Gastrocnemius medialis (tissue), 4 donors: ENCODE measurements at regions of chr9 and their contacts with region 1.

Region 1: GRCh38 chr9:14428781-14429230 is 114.9 kb upstream of the NFIB start:
- DNase-seq: peak; percentile 19 to 44
- ATAC-seq: peak; percentile 42 to 82
- H3K4me3 ChIP-seq: no peak overlapping the region
- H3K27ac ChIP-seq: no peak overlapping the region
- H3K4me1 ChIP-seq: peaks cover 5 to 10% of the 10 kb centered on the region in 2 donors
- H3K27me3 ChIP-seq: no peaks in the 10 kb centered on the region
- CTCF ChIP-seq: peak; percentile 45 to 85 (median 59)
- POLR2A ChIP-seq: no peak

Region 2: DNA sequence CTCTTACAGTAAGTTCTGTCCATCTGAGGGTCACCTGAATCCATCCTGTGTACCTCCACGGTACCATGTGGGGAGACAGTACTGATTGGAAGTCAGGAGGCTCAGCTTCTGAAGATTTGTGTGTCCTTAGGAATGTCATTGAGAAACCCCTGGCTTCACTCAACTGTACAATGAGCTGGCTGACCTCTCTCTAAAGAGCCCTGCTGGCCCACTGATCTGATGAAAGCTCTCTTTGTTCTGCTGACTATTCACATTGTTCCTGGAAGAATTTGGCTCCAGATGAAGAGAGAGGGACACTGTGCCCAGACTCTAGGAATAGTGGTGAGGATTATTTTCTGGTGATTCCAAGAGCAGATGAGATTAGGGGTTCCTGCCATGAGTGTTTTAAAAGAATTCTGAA is 1512.8 kb before region 1 on chr9:
- in situ Hi-C with region 1: no loop called
- intact Hi-C with region 1: loop called (anchors 10 kb)
- DNase-seq: no peak
- ATAC-seq: no peak
- H3K4me3 ChIP-seq: no peak overlapping the region
- H3K27ac ChIP-seq: no peak overlapping the region
- H3K4me1 ChIP-seq: no peaks in the 10 kb centered on the region
- H3K27me3 ChIP-seq: no peaks in the 10 kb centered on the region
- CTCF ChIP-seq: no peak
- POLR2A ChIP-seq: no peak

Region 3: GRCh38 chr9:13213337-13213736 is 1215.5 kb before region 1 on chr9:
- in situ Hi-C with region 1: loop called in 1 of 4 experiments (anchors 25 kb)
- intact Hi-C with region 1: no loop called
- DNase-seq: no peak
- ATAC-seq: no peak
- H3K4me3 ChIP-seq: no peak overlapping the region
- H3K27ac ChIP-seq: no peak overlapping the region
- H3K4me1 ChIP-seq: peaks cover 0 to 7% of the 10 kb centered on the region in 2 donors
- H3K27me3 ChIP-seq: no peaks in the 10 kb centered on the region
- CTCF ChIP-seq: peak in 4 of 5 experiments; percentile 19 to 53 (median 31)
- POLR2A ChIP-seq: no peak

Region 4: GRCh38 chr9:14466429-14466818 is 37.6 kb after region 1 on chr9:
- in situ Hi-C with region 1: no loop called
- intact Hi-C with region 1: no loop called
- DNase-seq: no peak
- ATAC-seq: no peak
- H3K4me3 ChIP-seq: no peak overlapping the region
- H3K27ac ChIP-seq: no peak overlapping the region
- H3K4me1 ChIP-seq: no peaks in the 10 kb centered on the region
- H3K27me3 ChIP-seq: no peaks in the 10 kb centered on the region
- CTCF ChIP-seq: no peak
- POLR2A ChIP-seq: no peak

Region 5: DNA sequence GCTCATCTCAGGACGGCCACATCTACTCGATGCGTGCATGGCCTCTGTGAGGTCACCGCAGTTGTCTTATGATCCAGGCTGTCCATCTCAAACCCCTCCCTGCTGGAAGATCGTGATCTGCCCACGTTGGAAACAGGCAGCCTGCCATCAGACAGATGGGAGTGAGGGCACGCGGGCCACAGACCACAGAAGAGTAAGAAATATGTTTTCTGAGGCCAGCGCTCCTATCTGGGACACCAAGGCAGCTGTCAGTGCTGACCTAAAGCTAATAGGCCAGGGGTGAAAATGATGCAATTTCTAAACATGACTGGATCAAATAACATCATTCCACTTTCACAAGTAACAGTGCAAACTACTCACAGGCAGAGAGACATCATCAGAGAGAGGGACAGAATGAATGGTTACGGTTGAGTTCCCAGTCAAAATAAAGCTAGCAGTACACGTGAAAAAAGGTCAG is 350.8 kb after region 1 on chr9:
- in situ Hi-C with region 1: no loop called
- intact Hi-C with region 1: no loop called
- DNase-seq: peak; percentile 66 to 79
- ATAC-seq: peak; percentile 70 to 78
- H3K4me3 ChIP-seq: peak overlapping the region; percentile 20 to 34 (median 28)
- H3K27ac ChIP-seq: peak overlapping the region; percentile 77 to 94 (median 88)
- H3K4me1 ChIP-seq: peaks cover 27 to 51% of the 10 kb centered on the region in 2 donors
- H3K27me3 ChIP-seq: no peaks in the 10 kb centered on the region
- CTCF ChIP-seq: no peak
- POLR2A ChIP-seq: peak; percentile 28 to 58

Region 6: GRCh38 chr9:14846871-14847311 is 418.1 kb after region 1 on chr9:
- in situ Hi-C with region 1: no loop called
- intact Hi-C with region 1: no loop called
- DNase-seq: peak in 1 of 2 donors; percentile 17
- ATAC-seq: no peak
- H3K4me3 ChIP-seq: no peak overlapping the region
- H3K27ac ChIP-seq: no peak overlapping the region
- H3K4me1 ChIP-seq: no peaks in the 10 kb centered on the region
- H3K27me3 ChIP-seq: no peaks in the 10 kb centered on the region
- CTCF ChIP-seq: peak; percentile 15 to 56 (median 35)
- POLR2A ChIP-seq: no peak